Colonic mucosa (tissue), 4 donors: ENCODE measurements at regions of chr7 and their contacts with region 1.

Region 1: DNA sequence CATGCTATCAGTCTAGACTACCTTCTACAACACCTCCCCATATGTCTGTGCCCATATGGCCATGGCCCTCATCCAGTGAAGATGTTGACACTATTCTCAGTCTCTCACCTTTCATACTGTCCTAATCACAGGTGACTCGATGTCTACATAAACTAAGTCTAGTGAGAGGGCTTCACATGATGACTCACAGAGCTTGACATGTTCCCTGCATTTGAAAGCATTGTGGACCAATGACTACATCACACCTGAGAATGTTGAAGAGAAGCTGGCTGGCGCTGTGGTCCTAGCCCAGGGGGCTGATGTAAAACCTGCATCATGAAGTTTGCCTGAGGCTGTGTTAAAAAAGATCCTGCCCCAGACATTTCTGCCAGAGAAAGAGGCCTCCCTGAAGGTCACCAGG is 167.2 kb downstream of the NPSR1 start:
- DNase-seq: no peak
- H3K4me3 ChIP-seq: no peak overlapping the region
- H3K27ac ChIP-seq: no peak overlapping the region
- H3K4me1 ChIP-seq: no peaks in the 10 kb centered on the region
- H3K27me3 ChIP-seq: no peaks in the 10 kb centered on the region
- CTCF ChIP-seq: no peak

Region 2: GRCh38 chr7:35037526-35038339 is 212.5 kb after region 1 on chr7:
- intact Hi-C with region 1: loop called (anchors 5 kb)
- DNase-seq: peak; percentile 91
- H3K4me3 ChIP-seq: peak overlapping the region; percentile 63
- H3K27ac ChIP-seq: peak overlapping the region; percentile 90
- H3K4me1 ChIP-seq: no peaks in the 10 kb centered on the region
- H3K27me3 ChIP-seq: no peaks in the 10 kb centered on the region
- CTCF ChIP-seq: peak; percentile 86